ENCODE measurements at regions of chr1 and their contacts with region 1.

Region 1: DNA sequence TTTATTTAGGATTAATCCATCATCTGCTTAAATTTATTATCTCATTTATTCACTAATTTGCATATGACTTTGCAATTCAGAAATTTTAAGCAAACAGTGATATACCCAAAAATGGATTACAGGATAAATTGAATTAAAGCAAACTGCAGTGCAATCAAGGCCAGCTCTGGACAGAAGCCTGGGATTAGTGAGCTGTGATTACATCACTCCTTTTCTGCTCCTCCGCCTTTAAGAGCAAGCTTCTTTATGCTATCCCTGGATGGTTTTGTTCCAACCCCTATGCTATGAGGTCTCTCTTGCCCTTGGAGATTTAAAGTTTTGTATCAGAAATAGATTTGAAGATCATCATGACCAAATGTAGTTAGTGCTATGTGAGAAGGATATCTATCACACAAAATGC is 32.6 kb downstream of the GPR52 start:
- DNase-seq: no peak
- H3K4me3 ChIP-seq: no peak overlapping the region
- H3K27ac ChIP-seq: no peak overlapping the region
- H3K4me1 ChIP-seq: no peaks in the 10 kb centered on the region
- H3K27me3 ChIP-seq: no peaks in the 10 kb centered on the region
- CTCF ChIP-seq: no peak

Region 2: DNA sequence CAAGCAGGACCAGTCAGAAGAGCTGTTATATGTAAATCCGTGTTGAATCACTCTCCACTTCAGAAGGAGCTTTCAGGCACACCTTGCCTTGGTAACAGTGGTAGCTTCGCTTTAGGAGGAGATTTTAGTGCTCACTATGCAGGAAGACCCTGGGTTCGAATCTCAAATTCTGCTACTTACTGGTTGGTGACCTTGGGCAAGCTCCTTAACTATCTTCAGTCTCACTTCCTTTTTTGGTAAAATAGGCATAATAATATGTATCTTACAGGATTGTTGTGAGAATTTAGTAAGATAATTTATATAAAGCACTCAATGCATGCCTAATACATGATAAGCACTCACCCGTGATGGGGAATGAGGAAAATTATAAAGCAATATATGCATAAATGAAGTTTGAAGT is 79.2 kb before region 1 on chr1:
- CTCF ChIA-PET with region 1: no interaction called
- dilution Hi-C with region 1: loop called (anchors 5 kb)
- in situ Hi-C with region 1: no loop called
- intact Hi-C with region 1: no loop called
- DNase-seq: no peak
- H3K4me3 ChIP-seq: no peak overlapping the region
- H3K27ac ChIP-seq: no peak overlapping the region
- H3K4me1 ChIP-seq: no peaks in the 10 kb centered on the region
- H3K27me3 ChIP-seq: no peaks in the 10 kb centered on the region
- CTCF ChIP-seq: no peak

Region 3: DNA sequence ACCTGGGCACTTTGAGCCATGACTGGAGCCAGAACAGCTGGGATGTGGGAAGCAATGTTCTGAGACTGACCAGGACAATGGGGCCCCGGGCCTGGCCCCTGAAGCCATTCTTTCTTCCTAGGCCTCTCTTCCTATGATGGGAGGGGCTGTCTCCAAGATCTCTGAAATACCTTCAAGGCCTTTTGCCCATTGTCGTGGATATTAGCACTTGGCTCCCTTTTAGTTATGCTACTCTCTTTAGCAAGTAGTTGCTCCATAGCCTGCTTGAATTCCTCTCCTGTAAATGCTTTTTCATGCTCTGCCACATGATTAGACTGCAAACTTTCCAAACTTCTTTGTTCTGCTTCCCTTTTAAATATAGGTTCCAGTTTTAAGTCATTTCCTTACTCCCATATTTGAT is 256.5 kb after region 1 on chr1:
- CTCF ChIA-PET with region 1: no interaction called
- dilution Hi-C with region 1: no loop called
- in situ Hi-C with region 1: no loop called
- intact Hi-C with region 1: loop called (anchors 10 kb)
- DNase-seq: no peak
- H3K4me3 ChIP-seq: no peak overlapping the region
- H3K27ac ChIP-seq: no peak overlapping the region
- H3K4me1 ChIP-seq: no peaks in the 10 kb centered on the region
- H3K27me3 ChIP-seq: no peaks in the 10 kb centered on the region
- CTCF ChIP-seq: no peak

Measured in mammary epithelial cell (primary cell).